ENCODE measurements at regions of chr4 and their contacts with region 1.

Region 1: DNA sequence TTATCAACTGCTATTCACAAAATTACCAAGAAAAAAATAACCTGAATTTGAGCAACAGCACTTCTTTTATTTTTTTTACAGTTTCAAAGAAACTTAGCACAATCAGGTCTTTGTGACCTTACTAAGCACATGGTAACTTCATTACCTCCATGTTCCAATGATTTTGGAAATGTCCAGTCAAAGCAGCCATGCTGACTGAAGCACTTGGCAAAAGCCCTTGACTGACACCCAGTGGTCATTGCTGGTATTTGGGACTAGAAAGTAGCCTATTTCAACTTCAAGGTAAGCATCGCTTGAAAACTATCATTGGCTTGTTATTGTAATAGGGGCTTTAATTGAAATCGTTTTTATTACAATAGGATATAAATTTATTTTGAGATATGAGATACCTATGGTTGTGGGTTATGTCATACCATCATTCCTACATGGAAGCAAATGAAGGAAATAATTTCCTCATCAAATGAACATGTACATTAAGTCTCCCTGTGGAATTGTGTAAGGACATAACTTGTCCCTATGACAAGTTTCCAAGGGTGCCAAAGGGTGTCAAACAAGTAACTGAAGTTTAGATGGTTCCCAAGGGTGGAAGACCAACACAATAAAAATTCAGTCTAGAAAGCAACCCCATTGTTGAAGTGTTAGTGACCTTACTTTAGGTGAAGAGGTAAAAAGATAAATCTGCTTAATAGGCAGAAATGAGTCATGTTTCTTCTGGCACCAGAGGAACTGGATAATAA is 15.2 kb upstream of the ANXA10 start:
- DNase-seq: no peak
- H3K4me3 ChIP-seq: no peak overlapping the region
- H3K27ac ChIP-seq: no peak overlapping the region
- H3K4me1 ChIP-seq: no peaks in the 10 kb centered on the region
- H3K27me3 ChIP-seq: no peaks in the 10 kb centered on the region
- CTCF ChIP-seq: peak; percentile 55 to 82 (median 72)
- EP300 ChIP-seq: no peak
- POLR2A ChIP-seq: no peak

Region 2: GRCh38 chr4:166165829-166166420 is 1911.2 kb before region 1 on chr4:
- intact Hi-C with region 1: loop called (anchors 10 kb)
- DNase-seq: no peak
- H3K4me3 ChIP-seq: no peak overlapping the region
- H3K27ac ChIP-seq: no peak overlapping the region
- H3K4me1 ChIP-seq: no peaks in the 10 kb centered on the region
- H3K27me3 ChIP-seq: no peaks in the 10 kb centered on the region
- CTCF ChIP-seq: peak; percentile 71 to 81 (median 73)
- EP300 ChIP-seq: no peak
- POLR2A ChIP-seq: no peak

Region 3: DNA sequence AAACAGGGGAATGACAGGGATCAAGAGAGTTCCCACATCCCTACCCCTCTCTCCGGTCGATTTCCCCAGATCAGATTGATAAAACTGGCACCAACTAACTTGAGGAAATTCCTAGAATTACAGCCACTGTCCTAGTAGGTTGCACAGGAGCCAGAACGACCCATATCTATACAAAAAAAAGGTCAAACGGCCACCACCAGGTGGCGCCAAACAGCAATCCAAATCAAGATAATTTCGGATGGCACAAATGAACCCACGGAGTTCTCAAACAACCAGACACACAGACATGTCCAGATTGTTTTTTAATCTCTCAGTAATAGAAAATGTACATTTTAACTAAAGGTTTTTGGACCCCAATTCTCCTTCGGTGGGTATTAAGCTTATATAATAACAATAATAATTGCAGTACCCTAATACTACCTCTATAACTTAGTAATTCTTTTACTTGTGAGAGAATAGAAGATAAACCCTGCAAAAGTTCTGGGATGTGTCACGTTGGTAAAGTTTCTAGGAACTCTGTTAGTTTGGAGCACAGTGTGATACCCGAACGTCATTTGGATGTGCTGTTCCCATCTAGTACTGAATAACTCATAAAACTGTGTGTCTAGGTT is 1055.5 kb before region 1 on chr4:
- intact Hi-C with region 1: loop called (anchors 5 kb)
- DNase-seq: no peak
- H3K4me3 ChIP-seq: no peak overlapping the region
- H3K27ac ChIP-seq: no peak overlapping the region
- H3K4me1 ChIP-seq: no peaks in the 10 kb centered on the region
- H3K27me3 ChIP-seq: no peaks in the 10 kb centered on the region
- CTCF ChIP-seq: peak; percentile 45 to 78 (median 73)
- EP300 ChIP-seq: no peak
- POLR2A ChIP-seq: no peak

Region 4: DNA sequence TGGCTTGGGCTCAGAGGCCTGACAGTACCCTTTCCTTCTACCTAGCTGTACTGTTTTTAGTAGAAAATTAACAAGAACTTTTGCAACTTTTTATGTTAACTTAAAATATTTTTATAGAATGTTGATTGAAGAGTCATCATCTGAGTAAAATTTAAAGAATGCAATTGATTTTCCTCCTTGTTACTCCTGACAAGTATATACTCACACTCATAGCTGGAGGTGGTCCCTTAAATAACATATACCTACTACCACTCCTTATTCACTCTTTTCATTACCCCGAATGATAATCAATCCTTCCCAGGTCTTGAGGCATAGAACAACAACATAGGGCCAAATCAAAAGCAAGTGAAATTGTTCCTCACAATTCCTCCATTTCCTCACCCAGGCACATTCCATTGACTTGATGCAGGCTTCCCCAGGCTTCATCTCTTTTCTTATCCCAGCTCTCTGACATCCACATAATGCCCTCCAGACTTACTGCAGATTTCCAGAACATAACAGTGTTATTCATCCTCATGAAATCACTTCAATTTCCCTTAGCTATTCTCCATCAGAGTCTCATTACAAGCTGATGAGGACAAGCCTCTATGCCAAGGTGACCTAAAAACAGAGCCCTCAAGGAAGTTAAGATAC is 58.0 kb before region 1 on chr4:
- intact Hi-C with region 1: no loop called
- DNase-seq: no peak
- H3K4me3 ChIP-seq: no peak overlapping the region
- H3K27ac ChIP-seq: no peak overlapping the region
- H3K4me1 ChIP-seq: no peaks in the 10 kb centered on the region
- H3K27me3 ChIP-seq: no peaks in the 10 kb centered on the region
- CTCF ChIP-seq: no peak
- EP300 ChIP-seq: no peak
- POLR2A ChIP-seq: no peak